ENCODE measurements at regions of chr19 and their contacts with region 1.

Region 1: GRCh38 chr19:18192673-18193387 is at the start of gene MPV17L2:
- DNase-seq: peak; percentile 99
- ATAC-seq: peak; percentile 94
- H3K4me3 Mint-ChIP-seq: peak within 1 kb of the TSS; percentile 82
- H3K27ac Mint-ChIP-seq: peak within 1 kb of the TSS; percentile 97
- H3K4me1 Mint-ChIP-seq: peaks cover 20% of the 10 kb centered on the region
- H3K27me3 Mint-ChIP-seq: peaks cover 2% of the 10 kb centered on the region; the same call in 1 of the 2 replicates
- CTCF ChIP-seq: no peak
- total RNA-seq, gene MPV17L2: 26.3 to 29.8 TPM (median 28.0 TPM) in 3 replicates

Region 2: DNA sequence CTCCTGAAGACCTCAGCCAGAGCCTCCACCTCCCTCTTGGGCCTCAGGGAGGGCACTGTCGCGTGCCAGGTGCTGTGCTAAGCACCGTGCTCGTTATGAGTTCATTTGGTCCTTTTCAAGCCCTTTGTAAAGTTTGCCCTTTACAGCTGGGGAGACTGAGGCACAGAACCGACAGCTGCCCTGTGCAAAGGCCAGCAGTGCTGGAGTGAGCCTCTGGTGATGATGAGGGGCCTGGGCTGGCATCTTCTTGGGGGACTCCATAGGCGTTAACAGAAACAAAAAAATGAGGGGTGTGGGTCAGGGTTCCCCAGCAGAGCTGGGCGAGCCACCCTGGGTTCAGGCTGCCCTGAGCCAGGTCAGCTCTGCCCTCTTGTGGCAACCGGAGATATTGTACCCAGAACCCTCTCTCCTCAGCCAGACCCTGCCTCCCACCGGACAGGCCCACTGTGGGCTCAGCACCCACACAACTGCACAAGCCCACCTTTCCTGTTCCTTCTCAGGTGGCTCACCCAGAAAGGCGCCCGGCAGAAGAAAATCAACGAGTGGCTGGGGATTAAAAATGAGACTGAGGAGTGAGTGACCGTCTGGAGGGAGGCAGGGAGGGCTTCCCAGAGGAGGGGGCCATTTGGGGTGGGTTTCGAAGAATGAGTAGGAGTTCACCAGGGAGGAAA is 24.7 kb before region 1 on chr19:
- CTCF ChIA-PET with region 1: interaction called, 12 read pairs
- POLR2A ChIA-PET with region 1: no interaction called
- DNase-seq: peak; percentile 71
- ATAC-seq: peak; percentile 93
- H3K4me3 Mint-ChIP-seq: no peak overlapping the region
- H3K27ac Mint-ChIP-seq: no peak overlapping the region
- H3K4me1 Mint-ChIP-seq: no peaks in the 10 kb centered on the region; the same call in 1 of the 2 replicates
- H3K27me3 Mint-ChIP-seq: no peaks in the 10 kb centered on the region
- CTCF ChIP-seq: peak; percentile 81

Region 3: GRCh38 chr19:18173572-18174288 is 19.1 kb before region 1 on chr19 and contains the start of gene IFI30:
- CTCF ChIA-PET with region 1: interaction called, 14 read pairs
- POLR2A ChIA-PET with region 1: no interaction called
- DNase-seq: peak; percentile 77
- ATAC-seq: peak; percentile 82
- H3K4me3 Mint-ChIP-seq: peak within 1 kb of the TSS; percentile 80
- H3K27ac Mint-ChIP-seq: no peak within 1 kb of the TSS
- H3K4me1 Mint-ChIP-seq: peaks cover 9% of the 10 kb centered on the region
- H3K27me3 Mint-ChIP-seq: peaks cover 19% of the 10 kb centered on the region
- CTCF ChIP-seq: no peak
- total RNA-seq, gene IFI30: 20.2 to 30.3 TPM (median 26.2 TPM) in 3 replicates

Region 4: GRCh38 chr19:18233224-18233825 is 40.5 kb after region 1 on chr19:
- CTCF ChIA-PET with region 1: interaction called, 25 read pairs
- POLR2A ChIA-PET with region 1: interaction called, 6 read pairs
- DNase-seq: peak; percentile 93
- ATAC-seq: peak; percentile 79
- H3K4me3 Mint-ChIP-seq: peak overlapping the region; percentile 78
- H3K27ac Mint-ChIP-seq: no peak overlapping the region
- H3K4me1 Mint-ChIP-seq: peaks cover 31% of the 10 kb centered on the region
- H3K27me3 Mint-ChIP-seq: peaks cover 12% of the 10 kb centered on the region
- CTCF ChIP-seq: no peak

Measured in WTC11 (cell line).